G401 (cell line): ENCODE measurements at regions of chr15 and their contacts with region 1.

Region 1: GRCh38 chr15:77543159-77543882 is 89.4 kb downstream of the LINGO1 start:
- DNase-seq: peak; percentile 85

Region 2: GRCh38 chr15:77599899-77600298 is 56.6 kb after region 1 on chr15:
- in situ Hi-C with region 1: loop called (anchors 10 kb)
- DNase-seq: peak; percentile 70